ENCODE measurements at regions of chr5 and their contacts with region 1.

Region 1: GRCh38 chr5:169161022-169161680 is 139.8 kb downstream of the SLIT3 start:
- DNase-seq: peak; percentile 79
- H3K4me3 ChIP-seq: no peak overlapping the region
- H3K27ac ChIP-seq: peak overlapping the region; percentile 86
- H3K4me1 ChIP-seq: peaks cover 67% of the 10 kb centered on the region
- H3K27me3 ChIP-seq: no peaks in the 10 kb centered on the region
- CTCF ChIP-seq: no peak

Region 2: GRCh38 chr5:169268019-169268418 is 106.9 kb after region 1 on chr5:
- CTCF ChIA-PET with region 1: no interaction called
- dilution Hi-C with region 1: no loop called
- in situ Hi-C with region 1: no loop called
- intact Hi-C with region 1: loop called (anchors 1 kb)
- DNase-seq: peak; percentile 55
- H3K4me3 ChIP-seq: no peak overlapping the region
- H3K27ac ChIP-seq: no peak overlapping the region
- H3K4me1 ChIP-seq: peaks cover 12% of the 10 kb centered on the region
- H3K27me3 ChIP-seq: no peaks in the 10 kb centered on the region
- CTCF ChIP-seq: no peak